ENCODE measurements at regions of chr10 and their contacts with region 1.

Region 1: GRCh38 chr10:27223964-27224363 is 16.6 kb downstream of the ACBD5 start:
- DNase-seq: no peak
- H3K4me3 ChIP-seq: no peak overlapping the region
- H3K27ac ChIP-seq: no peak overlapping the region
- H3K4me1 ChIP-seq: no peaks in the 10 kb centered on the region
- H3K27me3 ChIP-seq: no peaks in the 10 kb centered on the region
- CTCF ChIP-seq: peak in 2 of 4 experiments; percentile 46 to 51
- EP300 ChIP-seq: no peak
- POLR2A ChIP-seq: no peak

Region 2: GRCh38 chr10:27099916-27100812 is 123.8 kb before region 1 on chr10 and contains the start of gene ANKRD26:
- intact Hi-C with region 1: no loop called
- DNase-seq: peak; percentile 99
- H3K4me3 ChIP-seq: peak within 1 kb of the TSS; percentile 47 to 80 (median 64)
- H3K27ac ChIP-seq: peak within 1 kb of the TSS; percentile 86 to 93 (median 90)
- H3K4me1 ChIP-seq: peaks cover 0 to 18% (median 14%) of the 10 kb centered on the region in 4 donors
- H3K27me3 ChIP-seq: no peaks in the 10 kb centered on the region
- CTCF ChIP-seq: no peak
- EP300 ChIP-seq: no peak
- POLR2A ChIP-seq: peak; percentile 81
- total RNA-seq, gene ANKRD26: 8.6 to 20.5 (median 11.9) TPM

Region 3: DNA sequence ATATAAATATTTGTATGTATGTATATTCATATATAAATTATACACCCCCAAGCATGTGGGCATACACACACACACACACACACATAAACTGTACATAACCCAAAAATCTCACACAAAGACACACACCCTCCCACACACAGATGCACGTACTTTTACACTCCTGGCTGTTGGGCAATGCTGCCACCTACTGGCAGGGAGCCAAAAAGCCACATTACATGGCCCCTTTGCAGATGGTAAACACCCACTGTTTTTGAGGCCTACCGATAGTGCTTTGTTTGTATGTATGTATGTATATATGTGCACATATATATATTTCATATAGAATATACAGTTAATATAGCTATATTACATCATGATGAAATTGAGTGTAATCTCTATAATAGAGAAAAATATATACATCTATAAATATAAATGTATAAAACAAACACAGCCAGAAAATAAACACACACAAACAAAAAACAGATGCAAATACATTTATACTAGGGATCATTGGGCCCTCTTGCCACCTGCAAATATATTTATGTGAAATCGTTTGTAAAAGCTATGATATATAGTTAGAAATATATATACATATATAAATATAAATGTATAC is 136.7 kb after region 1 on chr10:
- intact Hi-C with region 1: loop called (anchors 5 kb)
- DNase-seq: peak; percentile 86
- H3K4me3 ChIP-seq: no peak overlapping the region
- H3K27ac ChIP-seq: no peak overlapping the region
- H3K4me1 ChIP-seq: no peaks in the 10 kb centered on the region
- H3K27me3 ChIP-seq: no peaks in the 10 kb centered on the region
- CTCF ChIP-seq: peak; percentile 15 to 50 (median 34)
- EP300 ChIP-seq: no peak
- POLR2A ChIP-seq: no peak

Measured in sigmoid colon (tissue), 7 donors.